Activated CD4-positive, alpha-beta memory T cell treated with anti-CD3 and anti-CD28 coated beads, Interleukin-2, amount 10 ng/mL, durations not matched to agents 7 days and 5 days (primary cell): ENCODE measurements at regions of chr6 and their contacts with region 1.

Region 1: DNA sequence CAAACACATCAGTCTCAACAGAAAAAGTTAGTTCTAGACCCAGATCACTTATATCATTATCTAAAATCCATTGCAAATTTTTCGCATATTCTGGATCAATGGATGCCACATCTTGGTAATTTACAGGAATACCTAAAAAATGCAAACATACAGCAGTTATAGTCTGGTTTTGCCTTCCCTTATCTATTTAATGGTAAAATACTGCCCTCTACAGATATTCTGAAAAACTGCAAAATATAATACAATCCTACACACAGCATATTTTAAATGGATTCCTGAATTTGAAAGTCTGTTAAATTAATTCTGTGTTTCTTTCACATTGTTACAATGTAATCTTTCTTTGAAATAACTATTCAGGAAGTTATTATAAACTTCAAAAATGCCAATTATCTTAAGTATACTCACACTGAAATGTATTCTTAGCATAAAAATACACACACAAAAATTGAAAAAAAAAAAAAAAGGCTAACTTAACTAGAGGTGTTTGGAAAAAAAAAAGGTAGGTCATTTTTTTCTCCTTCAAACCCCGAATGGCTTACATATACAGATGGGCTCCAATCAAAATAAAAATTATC is 88.4 kb downstream of the HACE1 start:
- DNase-seq: no peak
- H3K4me3 Mint-ChIP-seq: no peak overlapping the region
- H3K27ac Mint-ChIP-seq: no peak overlapping the region
- H3K4me1 Mint-ChIP-seq: peaks cover 7% of the 10 kb centered on the region
- H3K27me3 Mint-ChIP-seq: no peaks in the 10 kb centered on the region

Region 2: DNA sequence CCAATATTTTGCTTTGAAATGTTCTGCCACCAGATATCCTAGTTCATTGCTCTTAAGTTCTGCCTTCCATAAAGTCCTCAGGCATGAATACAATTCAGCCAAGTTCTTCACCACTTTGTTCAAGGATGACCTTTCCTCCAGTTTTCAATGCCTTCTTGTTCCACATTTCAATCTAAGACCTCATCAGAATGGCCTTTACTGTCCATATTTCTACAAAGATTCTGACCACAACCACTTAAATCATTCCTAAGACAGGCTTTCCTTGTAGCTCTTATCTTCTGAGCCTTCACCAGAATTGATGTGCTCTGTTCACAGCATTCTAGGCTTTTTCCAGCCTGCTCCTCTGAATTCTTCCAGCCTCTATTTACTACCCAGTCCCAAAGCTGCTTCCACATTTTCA is 230.6 kb before region 1 on chr6:
- CTCF ChIA-PET with region 1: no interaction called
- POLR2A ChIA-PET with region 1: no interaction called
- DNase-seq: no peak
- H3K4me3 Mint-ChIP-seq: no peak overlapping the region
- H3K27ac Mint-ChIP-seq: no peak overlapping the region
- H3K4me1 Mint-ChIP-seq: no peaks in the 10 kb centered on the region
- H3K27me3 Mint-ChIP-seq: peaks cover under 1% of the 10 kb centered on the region

Region 3: GRCh38 chr6:104682722-104683643 is 88.4 kb before region 1 on chr6:
- CTCF ChIA-PET with region 1: interaction called, 66 read pairs
- POLR2A ChIA-PET with region 1: interaction called, 3 read pairs
- DNase-seq: peak; percentile 76
- H3K4me3 Mint-ChIP-seq: no peak overlapping the region
- H3K27ac Mint-ChIP-seq: no peak overlapping the region
- H3K4me1 Mint-ChIP-seq: peaks cover 15% of the 10 kb centered on the region
- H3K27me3 Mint-ChIP-seq: no peaks in the 10 kb centered on the region

Region 4: GRCh38 chr6:104813552-104813951 is 42.2 kb after region 1 on chr6:
- CTCF ChIA-PET with region 1: no interaction called
- POLR2A ChIA-PET with region 1: no interaction called
- DNase-seq: no peak
- H3K4me3 Mint-ChIP-seq: no peak overlapping the region
- H3K27ac Mint-ChIP-seq: no peak overlapping the region
- H3K4me1 Mint-ChIP-seq: peaks cover 2% of the 10 kb centered on the region
- H3K27me3 Mint-ChIP-seq: no peaks in the 10 kb centered on the region

Region 5: DNA sequence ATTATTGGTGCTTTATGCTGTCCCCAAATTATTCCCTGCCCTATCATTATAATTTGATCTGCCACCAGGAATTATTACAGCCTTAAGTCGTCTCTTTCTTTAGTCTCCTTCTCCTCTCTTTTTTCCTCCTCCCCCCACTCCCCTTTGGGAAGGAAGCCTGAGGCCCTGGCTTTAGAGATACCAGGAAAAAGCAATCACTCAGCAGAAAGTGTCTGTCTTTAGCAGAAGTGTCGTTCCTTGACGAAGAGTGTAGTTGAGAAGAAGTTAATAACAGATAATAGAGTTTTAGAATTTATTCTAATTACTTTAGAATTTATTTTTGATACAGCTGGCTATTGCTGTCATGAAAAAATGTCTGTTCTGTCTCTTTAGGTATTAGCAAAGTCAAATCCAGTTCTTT is 202.1 kb after region 1 on chr6:
- CTCF ChIA-PET with region 1: no interaction called
- POLR2A ChIA-PET with region 1: no interaction called
- DNase-seq: no peak
- H3K4me3 Mint-ChIP-seq: no peak overlapping the region
- H3K27ac Mint-ChIP-seq: no peak overlapping the region
- H3K4me1 Mint-ChIP-seq: no peaks in the 10 kb centered on the region
- H3K27me3 Mint-ChIP-seq: no peaks in the 10 kb centered on the region